ENCODE measurements at regions of chr4 and their contacts with region 1.

Region 1: DNA sequence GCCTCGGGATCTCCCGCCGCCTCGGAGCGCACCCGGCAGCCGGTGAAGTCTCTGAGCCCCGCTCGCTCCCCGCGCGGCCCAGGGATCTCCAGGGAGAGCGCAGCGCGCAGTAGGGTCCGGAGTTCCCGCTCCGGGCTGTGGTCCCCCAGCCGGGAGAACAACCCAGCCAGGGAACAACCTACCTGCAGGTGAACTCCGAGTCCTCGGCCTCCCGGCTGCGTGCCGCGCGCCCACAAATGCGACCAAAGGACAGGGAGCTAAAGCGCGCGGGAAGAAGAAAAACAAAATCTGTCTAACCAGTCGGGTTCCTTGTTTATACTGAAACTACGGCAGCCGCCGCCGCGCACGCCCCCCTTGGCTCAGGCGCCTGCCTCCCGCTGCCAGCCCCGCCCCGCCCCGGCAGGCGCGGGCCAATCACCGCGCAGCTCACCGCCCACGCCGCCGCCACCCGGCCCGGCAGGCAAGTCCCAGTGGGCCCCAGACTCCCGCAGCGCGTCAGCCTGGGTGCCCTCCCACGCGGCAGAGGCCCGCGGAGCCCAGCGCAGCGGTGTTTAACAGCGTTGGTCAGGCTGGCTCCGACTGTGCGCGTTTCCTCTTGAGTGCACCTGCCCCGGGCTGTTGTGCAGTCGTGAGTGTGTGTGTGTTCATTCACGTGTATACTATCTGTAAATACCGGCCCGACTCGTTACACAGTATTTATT is at the start of gene RASGEF1B:
- DNase-seq: peak; percentile 91 to 95 (median 92)
- ATAC-seq: peak; percentile 93 to 99 (median 98)
- H3K4me3 ChIP-seq: peak within 1 kb of the TSS; percentile 70 to 96 (median 87)
- H3K27ac ChIP-seq: peak within 1 kb of the TSS; percentile 62 to 94 (median 86)
- H3K4me1 ChIP-seq: peaks cover 0 to 46% (median 21%) of the 10 kb centered on the region in 12 donors
- H3K27me3 ChIP-seq: no peaks in the 10 kb centered on the region
- CTCF ChIP-seq: peak in 1 of 12 donors; percentile 5
- POLR2A ChIP-seq: peak in 1 of 2 donors; percentile 72
- total RNA-seq, gene RASGEF1B: 1.8 to 11.9 (median 3.2) TPM

Region 2: GRCh38 chr4:81352446-81352835 is 119.3 kb before region 1 on chr4:
- intact Hi-C with region 1: no loop called
- DNase-seq: no peak
- ATAC-seq: no peak
- H3K4me3 ChIP-seq: no peak overlapping the region
- H3K27ac ChIP-seq: no peak overlapping the region
- H3K4me1 ChIP-seq: no peaks in the 10 kb centered on the region
- H3K27me3 ChIP-seq: peaks cover 0 to 4% (median 0%) of the 10 kb centered on the region in 9 donors
- CTCF ChIP-seq: no peak
- POLR2A ChIP-seq: no peak

Region 3: GRCh38 chr4:81538716-81539427 is 67.1 kb after region 1 on chr4:
- intact Hi-C with region 1: no loop called
- DNase-seq: no peak
- ATAC-seq: no peak
- H3K4me3 ChIP-seq: no peak overlapping the region
- H3K27ac ChIP-seq: peak overlapping the region in 1 of 12 donors; percentile 11
- H3K4me1 ChIP-seq: peaks cover 0 to 6% (median 0%) of the 10 kb centered on the region in 12 donors
- H3K27me3 ChIP-seq: no peaks in the 10 kb centered on the region
- CTCF ChIP-seq: no peak
- POLR2A ChIP-seq: no peak

Region 4: GRCh38 chr4:81565142-81565870 is 93.6 kb after region 1 on chr4:
- intact Hi-C with region 1: loop called in 1 of 10 experiments (anchors 10 kb)
- DNase-seq: peak; percentile 86 to 90 (median 88)
- ATAC-seq: peak; percentile 95 to 98 (median 97)
- H3K4me3 ChIP-seq: peak overlapping the region in 9 of 12 donors; percentile 28 to 47 (median 35)
- H3K27ac ChIP-seq: peak overlapping the region; percentile 51 to 91 (median 75)
- H3K4me1 ChIP-seq: peaks cover 0 to 36% (median 8%) of the 10 kb centered on the region in 12 donors
- H3K27me3 ChIP-seq: no peaks in the 10 kb centered on the region
- CTCF ChIP-seq: no peak
- POLR2A ChIP-seq: peak in 1 of 2 donors; percentile 36

Region 5: DNA sequence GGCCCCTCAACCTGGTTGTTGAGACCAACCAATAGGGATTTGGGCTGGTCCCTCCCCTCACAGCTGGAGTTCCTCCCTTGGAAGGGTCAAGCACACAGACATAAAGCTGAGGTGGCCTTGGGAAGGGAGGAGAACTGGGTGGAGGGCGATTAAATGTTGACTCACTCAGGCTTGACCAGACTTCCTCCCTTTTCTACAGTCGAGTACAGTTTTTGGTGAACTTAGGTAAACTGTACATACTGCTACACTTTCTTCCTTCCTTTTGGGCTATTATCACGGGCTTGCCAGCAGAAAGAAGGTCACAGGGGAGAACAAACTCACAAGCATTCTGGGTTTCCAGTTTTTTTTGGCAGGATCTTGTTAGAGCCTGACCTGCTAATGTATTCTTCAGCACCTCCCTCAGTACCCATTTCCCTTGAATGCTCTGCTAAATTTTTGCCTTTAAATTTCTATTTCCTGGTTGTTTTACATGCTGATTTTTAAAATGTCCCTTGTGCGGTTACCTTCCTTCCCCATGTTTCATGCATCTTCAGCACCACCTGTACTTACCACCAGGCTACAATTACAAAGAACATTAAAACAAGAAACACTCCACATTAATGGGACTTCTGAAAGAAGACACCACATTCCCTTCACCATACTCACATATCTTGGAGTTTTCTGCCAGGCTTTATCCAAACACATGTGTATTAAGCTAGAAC is 135.2 kb after region 1 on chr4:
- intact Hi-C with region 1: loop called in 2 of 10 experiments (anchors 5 to 10 kb)
- DNase-seq: peak in 3 of 5 donors; percentile 21 to 47 (median 27)
- ATAC-seq: peak; percentile 42 to 93 (median 90)
- H3K4me3 ChIP-seq: no peak overlapping the region
- H3K27ac ChIP-seq: peak overlapping the region in 2 of 12 donors; percentile 4 to 67
- H3K4me1 ChIP-seq: peaks cover 0 to 28% (median 1%) of the 10 kb centered on the region in 12 donors
- H3K27me3 ChIP-seq: no peaks in the 10 kb centered on the region
- CTCF ChIP-seq: no peak
- POLR2A ChIP-seq: no peak

Region 6: GRCh38 chr4:81827577-81828202 is 356.0 kb after region 1 on chr4:
- intact Hi-C with region 1: loop called in 1 of 10 experiments (anchors 5 kb)
- DNase-seq: no peak
- ATAC-seq: no peak
- H3K4me3 ChIP-seq: no peak overlapping the region
- H3K27ac ChIP-seq: no peak overlapping the region
- H3K4me1 ChIP-seq: peaks cover 0 to 3% (median 0%) of the 10 kb centered on the region in 12 donors
- H3K27me3 ChIP-seq: no peaks in the 10 kb centered on the region
- CTCF ChIP-seq: no peak
- POLR2A ChIP-seq: no peak

Region 7: DNA sequence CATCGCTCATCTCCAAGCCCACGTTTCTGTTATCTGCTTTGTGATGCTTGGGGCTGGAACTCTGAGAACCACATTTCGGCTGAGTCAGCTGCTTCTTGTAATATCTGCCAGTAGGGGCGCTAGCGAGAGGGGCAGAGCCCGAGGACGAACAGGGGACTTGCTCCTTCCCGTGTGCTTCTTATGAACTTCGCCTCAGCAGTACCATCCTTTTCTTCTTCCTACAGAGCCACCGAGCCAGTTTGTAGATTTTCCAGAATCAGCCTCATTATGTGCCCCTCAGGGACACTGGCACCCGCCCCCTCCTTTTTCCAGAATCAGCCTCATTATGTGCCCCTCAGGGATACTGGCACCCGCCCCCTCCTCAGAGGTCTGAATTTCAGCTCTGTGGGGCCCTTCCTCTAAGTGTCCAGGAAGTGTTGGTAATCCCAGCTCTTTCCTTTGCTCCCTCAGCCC is 441.7 kb after region 1 on chr4:
- intact Hi-C with region 1: loop called in 1 of 10 experiments (anchors 10 kb)
- DNase-seq: peak in 3 of 5 donors; percentile 19 to 38 (median 23)
- ATAC-seq: no peak
- H3K4me3 ChIP-seq: no peak overlapping the region
- H3K27ac ChIP-seq: no peak overlapping the region
- H3K4me1 ChIP-seq: peaks cover 0 to 4% (median 0%) of the 10 kb centered on the region in 12 donors
- H3K27me3 ChIP-seq: peaks cover 0 to 6% (median 0%) of the 10 kb centered on the region in 9 donors
- CTCF ChIP-seq: peak; percentile 27 to 66 (median 50)
- POLR2A ChIP-seq: no peak

Region 8: DNA sequence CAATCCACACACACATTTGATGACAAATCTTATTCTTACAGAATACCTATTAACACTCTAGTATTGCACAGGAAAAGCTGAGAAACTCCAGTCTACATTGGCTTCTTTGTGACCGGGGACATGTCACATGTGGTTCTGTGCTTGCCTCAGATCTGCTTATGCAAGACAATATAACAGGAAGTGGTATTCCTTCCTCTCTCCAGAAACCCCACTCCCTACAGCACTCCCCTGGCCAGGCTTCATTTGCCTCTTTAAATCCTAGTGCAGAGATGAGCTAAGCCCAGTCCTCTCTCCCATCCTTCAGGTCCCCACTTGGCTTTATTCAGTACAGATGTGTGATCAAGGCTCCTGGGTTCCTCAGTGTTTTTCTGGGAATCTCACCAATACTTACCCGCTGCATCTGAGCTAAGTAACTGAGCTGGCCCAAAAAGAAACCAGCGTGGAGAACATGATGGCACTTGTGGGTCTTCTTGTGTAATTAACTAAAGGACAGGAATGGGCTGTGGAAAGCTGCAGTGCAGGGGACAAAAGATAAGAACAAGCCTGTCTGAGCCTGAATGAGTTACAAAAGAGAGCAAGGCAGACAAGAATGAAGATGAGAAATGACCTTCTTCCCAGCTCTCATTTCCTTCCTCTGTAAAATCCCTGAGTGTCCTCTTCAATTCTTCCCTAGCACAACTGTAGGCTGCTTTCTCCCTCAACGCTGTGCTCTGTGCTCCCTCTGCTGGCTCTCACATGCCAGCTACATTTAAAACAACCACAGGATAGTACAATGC is 796.5 kb after region 1 on chr4:
- intact Hi-C with region 1: loop called in 2 of 10 experiments (anchors 10 kb)
- DNase-seq: peak; percentile 37 to 69 (median 40)
- ATAC-seq: peak; percentile 90 to 98 (median 96)
- H3K4me3 ChIP-seq: peak overlapping the region in 2 of 12 donors; percentile 15 to 25
- H3K27ac ChIP-seq: peak overlapping the region in 1 of 12 donors; percentile 75
- H3K4me1 ChIP-seq: peaks cover 0 to 8% (median 0%) of the 10 kb centered on the region in 12 donors
- H3K27me3 ChIP-seq: peaks cover 0 to 3% (median 0%) of the 10 kb centered on the region in 9 donors
- CTCF ChIP-seq: peak; percentile 50 to 78 (median 70)
- POLR2A ChIP-seq: no peak

Measured in heart left ventricle (tissue), 16 donors.